ENCODE measurements at regions of chr9 and their contacts with region 1.

Region 1: DNA sequence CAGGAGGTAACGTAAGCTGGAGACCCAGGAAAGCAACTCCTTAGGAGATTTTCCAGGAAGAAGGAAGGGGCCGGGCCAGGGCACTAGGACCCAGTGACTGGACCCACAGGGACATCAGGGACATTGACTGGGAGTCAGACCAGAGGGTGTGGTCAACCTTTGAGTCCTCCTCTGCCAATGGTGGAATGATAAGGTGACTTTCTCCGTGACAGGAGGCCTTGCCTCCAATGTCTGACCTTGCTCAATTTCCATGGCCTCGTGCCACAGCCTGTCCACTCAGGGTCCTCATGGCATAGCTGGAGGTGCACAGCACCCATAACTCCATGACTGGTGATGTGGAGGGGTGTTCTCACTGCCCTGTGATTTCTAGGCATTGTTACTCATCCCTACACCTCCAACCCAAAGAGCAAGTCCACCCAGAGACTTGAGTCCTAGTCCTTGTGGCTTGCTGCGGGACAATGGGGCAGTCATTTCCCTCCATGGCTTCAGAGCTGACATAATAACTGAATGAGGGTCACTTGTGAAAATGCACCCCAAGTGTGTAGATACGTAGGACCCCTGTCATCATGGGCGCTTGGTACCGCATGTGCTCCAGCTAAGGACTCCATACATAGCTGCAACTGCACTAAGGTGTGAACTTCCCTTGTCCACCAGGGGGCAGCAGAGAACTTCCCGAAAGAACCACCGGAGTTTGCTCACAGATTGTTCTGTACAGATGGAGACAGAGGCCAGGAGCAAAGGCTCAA is 4.1 kb upstream of the AMBP start:
- DNase-seq: peak; percentile 91
- H3K4me3 Mint-ChIP-seq: no peak overlapping the region
- H3K27ac Mint-ChIP-seq: no peak overlapping the region
- H3K4me1 Mint-ChIP-seq: no peaks in the 10 kb centered on the region
- H3K27me3 Mint-ChIP-seq: peaks cover 5% of the 10 kb centered on the region
- CTCF ChIP-seq: peak; percentile 81

Region 2: GRCh38 chr9:114033397-114034103 is 48.6 kb before region 1 on chr9:
- CTCF ChIA-PET with region 1: interaction called, 10 read pairs
- POLR2A ChIA-PET with region 1: no interaction called
- intact Hi-C with region 1: no loop called
- DNase-seq: peak; percentile 8
- H3K4me3 Mint-ChIP-seq: no peak overlapping the region
- H3K27ac Mint-ChIP-seq: no peak overlapping the region
- H3K4me1 Mint-ChIP-seq: no peaks in the 10 kb centered on the region
- H3K27me3 Mint-ChIP-seq: no peaks in the 10 kb centered on the region
- CTCF ChIP-seq: peak; percentile 33

Region 3: GRCh38 chr9:114108016-114108833 is 26.0 kb after region 1 on chr9:
- CTCF ChIA-PET with region 1: interaction called, 43 read pairs
- POLR2A ChIA-PET with region 1: no interaction called
- intact Hi-C with region 1: no loop called
- DNase-seq: peak; percentile 76
- H3K4me3 Mint-ChIP-seq: no peak overlapping the region
- H3K27ac Mint-ChIP-seq: no peak overlapping the region
- H3K4me1 Mint-ChIP-seq: peaks cover 6% of the 10 kb centered on the region
- H3K27me3 Mint-ChIP-seq: peaks cover 78% of the 10 kb centered on the region
- CTCF ChIP-seq: peak; percentile 91

Region 4: GRCh38 chr9:114285166-114285867 is 203.1 kb after region 1 on chr9:
- CTCF ChIA-PET with region 1: interaction called, 73 read pairs
- POLR2A ChIA-PET with region 1: interaction called, 4 read pairs
- intact Hi-C with region 1: no loop called
- DNase-seq: peak; percentile 68
- H3K4me3 Mint-ChIP-seq: no peak overlapping the region
- H3K27ac Mint-ChIP-seq: no peak overlapping the region
- H3K4me1 Mint-ChIP-seq: peaks cover 30% of the 10 kb centered on the region
- H3K27me3 Mint-ChIP-seq: no peaks in the 10 kb centered on the region
- CTCF ChIP-seq: no peak

Region 5: DNA sequence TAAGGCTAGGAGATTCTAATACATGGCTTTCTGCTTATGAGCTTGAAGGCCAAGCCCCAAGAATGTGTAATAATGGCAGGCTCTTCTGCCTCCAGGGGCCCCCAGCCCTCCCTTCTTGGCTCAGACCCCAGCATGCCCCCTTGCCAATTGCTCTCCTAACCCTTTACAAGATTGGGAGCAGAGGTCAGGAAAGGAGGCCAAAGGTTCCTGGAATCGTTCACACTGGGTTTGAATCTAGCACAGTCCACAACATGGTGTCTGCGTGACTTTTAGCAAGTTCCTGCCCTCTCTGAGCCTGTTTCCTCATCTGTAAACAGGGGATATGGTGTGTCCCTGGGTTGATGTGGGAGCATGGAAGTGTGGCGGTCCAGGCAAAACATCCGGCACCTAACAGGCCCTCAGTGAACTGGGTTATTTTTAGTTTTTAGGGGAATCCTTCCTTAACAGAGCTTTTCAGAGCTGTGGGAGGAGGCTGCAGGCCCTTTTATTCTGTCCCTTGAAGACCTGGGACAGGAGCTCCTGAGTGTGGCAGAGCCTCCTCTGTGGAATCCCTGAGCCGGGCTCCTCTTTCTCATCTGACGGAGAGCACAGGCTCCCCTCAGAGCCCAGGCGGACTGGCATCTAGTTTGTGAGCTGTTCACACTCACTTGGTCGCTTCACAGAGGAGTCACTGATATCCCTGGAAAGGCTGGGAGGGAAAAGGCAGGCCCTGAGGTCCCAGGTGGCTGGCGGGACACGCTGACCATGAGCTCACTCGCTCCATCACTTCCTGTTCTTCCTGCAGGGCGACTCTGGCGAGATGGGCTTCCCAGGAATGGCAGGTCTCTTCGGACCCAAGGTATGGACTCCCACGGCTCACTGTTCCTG is 217.3 kb after region 1 on chr9:
- CTCF ChIA-PET with region 1: interaction called, 18 read pairs
- POLR2A ChIA-PET with region 1: no interaction called
- intact Hi-C with region 1: no loop called
- DNase-seq: no peak
- H3K4me3 Mint-ChIP-seq: no peak overlapping the region
- H3K27ac Mint-ChIP-seq: no peak overlapping the region
- H3K4me1 Mint-ChIP-seq: no peaks in the 10 kb centered on the region
- H3K27me3 Mint-ChIP-seq: no peaks in the 10 kb centered on the region
- CTCF ChIP-seq: no peak

Measured in MCF 10A (cell line).